CD4-positive, alpha-beta memory T cell (primary cell): ENCODE measurements at regions of chr21 and their contacts with region 1.

Region 1: GRCh38 chr21:42220138-42220701 is 1.3 kb downstream of the ABCG1 start:
- DNase-seq: peak; percentile 89 to 96 (median 92)
- H3K4me3 ChIP-seq: peak overlapping the region; percentile 80 to 91
- H3K4me3 Mint-ChIP-seq: peak overlapping the region; percentile 86 to 100 (median 96)
- H3K27ac ChIP-seq: peak overlapping the region; percentile 84
- H3K27ac Mint-ChIP-seq: peak overlapping the region; percentile 87 to 100 (median 96)
- H3K4me1 ChIP-seq: peaks cover 27% of the 10 kb centered on the region
- H3K4me1 Mint-ChIP-seq: peaks cover 20 to 44% (median 28%) of the 10 kb centered on the region in 4 donors
- H3K27me3 ChIP-seq: no peaks in the 10 kb centered on the region
- H3K27me3 Mint-ChIP-seq: no peaks in the 10 kb centered on the region

Region 2: DNA sequence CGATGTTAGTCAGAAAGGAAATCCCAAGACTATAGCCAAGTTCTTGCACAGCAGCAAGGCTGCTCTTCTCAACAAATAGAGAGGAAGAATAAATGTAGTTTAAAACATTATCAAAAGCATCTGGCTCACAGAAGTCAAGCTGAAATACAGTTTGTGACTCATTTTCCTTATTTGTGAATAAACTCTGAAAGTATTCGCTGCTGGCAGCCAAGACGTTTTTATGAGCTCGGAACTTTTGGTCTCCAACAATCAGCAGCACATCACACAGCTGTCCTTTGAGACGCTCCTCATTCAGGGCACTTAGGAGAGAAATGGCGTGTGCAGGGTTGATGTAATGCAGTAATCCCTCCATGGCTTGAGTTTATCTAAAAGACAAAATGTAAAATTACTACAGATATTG is 226.5 kb before region 1 on chr21:
- CTCF ChIA-PET with region 1: no interaction called
- POLR2A ChIA-PET with region 1: no interaction called
- intact Hi-C with region 1: no loop called
- DNase-seq: no peak
- H3K4me3 ChIP-seq: no peak overlapping the region
- H3K4me3 Mint-ChIP-seq: no peak overlapping the region
- H3K27ac ChIP-seq: no peak overlapping the region
- H3K27ac Mint-ChIP-seq: no peak overlapping the region
- H3K4me1 ChIP-seq: no peaks in the 10 kb centered on the region
- H3K4me1 Mint-ChIP-seq: peaks cover 0 to 8% (median 0%) of the 10 kb centered on the region in 4 donors
- H3K27me3 ChIP-seq: no peaks in the 10 kb centered on the region
- H3K27me3 Mint-ChIP-seq: no peaks in the 10 kb centered on the region

Region 3: DNA sequence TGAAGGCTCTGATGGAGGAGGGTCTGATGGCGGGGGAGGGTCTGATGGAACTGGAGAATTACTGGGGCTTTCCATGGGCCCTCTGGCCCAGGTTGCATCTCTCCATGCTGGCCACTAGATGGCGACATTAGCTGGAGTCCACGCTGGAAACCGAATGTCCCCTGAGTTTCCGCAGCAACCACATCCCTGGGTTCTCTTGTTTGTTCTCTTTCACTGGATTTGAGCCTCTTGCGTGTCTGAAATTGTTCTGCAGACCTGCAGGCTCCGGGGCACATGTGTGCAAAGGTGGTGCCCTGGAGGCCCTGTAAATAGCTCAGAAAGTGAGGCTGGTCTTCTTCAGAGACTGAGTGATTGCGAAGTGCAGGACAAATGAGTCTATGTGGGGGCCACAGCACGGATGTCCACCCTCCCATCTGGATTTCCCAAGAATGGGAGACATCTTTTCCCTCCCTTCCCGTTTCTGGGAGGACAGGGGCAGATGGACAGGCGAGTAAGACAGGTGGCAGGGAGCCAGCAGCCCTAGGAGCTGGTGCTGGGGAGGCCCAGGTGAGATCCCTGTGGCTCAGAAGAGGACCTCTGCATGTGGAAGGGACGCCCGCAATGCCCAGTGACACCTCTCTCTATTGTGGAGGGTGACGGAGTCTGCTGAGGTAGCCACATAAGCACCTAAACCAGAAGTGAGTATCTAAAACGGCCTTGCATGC is 74.5 kb before region 1 on chr21:
- CTCF ChIA-PET with region 1: interaction called, 10 read pairs
- POLR2A ChIA-PET with region 1: no interaction called
- intact Hi-C with region 1: no loop called
- DNase-seq: peak; percentile 67 to 72 (median 70)
- H3K4me3 ChIP-seq: no peak overlapping the region
- H3K4me3 Mint-ChIP-seq: peak overlapping the region in 1 of 8 donors; percentile 13
- H3K27ac ChIP-seq: no peak overlapping the region
- H3K27ac Mint-ChIP-seq: peak overlapping the region; percentile 28 to 89 (median 51)
- H3K4me1 ChIP-seq: peaks cover 4% of the 10 kb centered on the region
- H3K4me1 Mint-ChIP-seq: peaks cover 4 to 7% (median 5%) of the 10 kb centered on the region in 4 donors
- H3K27me3 ChIP-seq: no peaks in the 10 kb centered on the region
- H3K27me3 Mint-ChIP-seq: peaks cover 5 to 7% of the 10 kb centered on the region in 2 donors

Region 4: DNA sequence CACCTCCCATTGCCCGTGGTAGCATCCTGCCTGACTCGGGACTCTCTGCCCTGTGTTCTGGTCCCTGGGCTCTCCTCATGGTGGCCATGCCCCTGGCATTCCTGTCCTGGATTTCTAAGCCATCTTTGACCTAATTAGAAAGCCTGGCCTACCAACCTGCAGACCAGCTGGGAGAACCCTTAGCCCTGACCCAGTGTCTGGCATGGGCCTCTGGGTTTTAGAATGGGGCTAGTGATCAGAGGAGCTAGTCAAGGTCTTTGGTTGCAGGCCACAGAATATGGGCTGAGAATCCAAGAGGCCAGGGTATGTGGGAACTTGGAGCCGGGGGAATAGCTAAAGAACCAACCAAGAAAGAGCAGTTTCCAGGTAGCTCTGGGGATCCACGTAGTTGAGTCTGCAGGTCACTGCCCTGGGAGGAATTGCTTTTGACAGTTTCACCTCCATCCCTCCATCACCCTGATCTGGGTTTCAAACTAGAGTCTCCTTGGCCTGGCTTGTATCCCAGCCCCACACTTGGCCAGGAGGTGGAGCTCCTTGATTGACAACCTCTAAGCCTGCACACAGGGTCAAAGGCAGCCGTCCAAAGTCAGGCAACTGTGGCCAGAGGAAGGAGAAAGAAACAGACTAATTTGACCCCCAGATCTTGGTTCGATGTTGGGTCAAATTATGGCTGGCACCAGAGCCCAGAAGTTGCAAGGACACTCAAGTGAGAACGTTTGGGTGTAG is 56.0 kb before region 1 on chr21:
- CTCF ChIA-PET with region 1: interaction called, 11 read pairs
- POLR2A ChIA-PET with region 1: no interaction called
- intact Hi-C with region 1: no loop called
- DNase-seq: peak; percentile 42 to 58 (median 51)
- H3K4me3 ChIP-seq: no peak overlapping the region
- H3K4me3 Mint-ChIP-seq: peak overlapping the region in 1 of 8 donors; percentile 21
- H3K27ac ChIP-seq: no peak overlapping the region
- H3K27ac Mint-ChIP-seq: peak overlapping the region in 3 of 7 donors; percentile 42 to 64 (median 59)
- H3K4me1 ChIP-seq: peaks cover 10% of the 10 kb centered on the region
- H3K4me1 Mint-ChIP-seq: peaks cover 8 to 40% (median 20%) of the 10 kb centered on the region in 4 donors
- H3K27me3 ChIP-seq: no peaks in the 10 kb centered on the region
- H3K27me3 Mint-ChIP-seq: no peaks in the 10 kb centered on the region

Region 5: DNA sequence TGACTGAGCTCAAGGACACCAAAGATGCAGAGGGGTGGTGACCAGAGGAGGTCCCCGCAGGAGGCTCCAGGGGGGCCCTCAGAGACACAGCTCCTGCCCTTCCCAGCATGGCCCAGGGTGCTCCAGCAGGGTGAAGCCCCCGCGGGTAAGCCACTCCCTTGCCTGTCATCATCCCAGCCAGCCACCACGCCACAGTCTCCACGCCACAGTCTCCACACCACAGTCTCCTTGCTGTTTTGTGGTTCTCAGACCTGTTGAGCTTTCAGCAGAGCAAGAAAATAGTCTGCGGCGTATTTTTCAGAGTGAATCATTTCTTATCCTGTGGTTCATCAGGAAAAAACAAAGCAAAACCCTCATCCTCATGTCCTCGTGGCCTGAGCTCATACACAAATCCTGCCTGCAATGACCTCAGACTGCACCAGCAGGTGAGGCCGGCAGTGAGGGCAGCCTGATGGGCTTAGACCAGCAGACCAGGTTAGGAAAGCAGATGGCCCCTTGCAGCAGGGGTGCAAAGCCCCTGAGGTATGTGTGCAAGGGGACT is 27.0 kb before region 1 on chr21:
- CTCF ChIA-PET with region 1: interaction called, 3 read pairs
- POLR2A ChIA-PET with region 1: interaction called, 35 read pairs
- intact Hi-C with region 1: loop called (anchors 1 kb)
- DNase-seq: peak; percentile 45 to 85 (median 49)
- H3K4me3 ChIP-seq: no peak overlapping the region
- H3K4me3 Mint-ChIP-seq: peak overlapping the region in 7 of 8 donors; percentile 22 to 79 (median 65)
- H3K27ac ChIP-seq: no peak overlapping the region
- H3K27ac Mint-ChIP-seq: peak overlapping the region; percentile 65 to 93 (median 84)
- H3K4me1 ChIP-seq: peaks cover 56% of the 10 kb centered on the region
- H3K4me1 Mint-ChIP-seq: peaks cover 38 to 70% (median 54%) of the 10 kb centered on the region in 4 donors
- H3K27me3 ChIP-seq: no peaks in the 10 kb centered on the region
- H3K27me3 Mint-ChIP-seq: no peaks in the 10 kb centered on the region

Region 6: GRCh38 chr21:42199488-42200458 is 20.4 kb before region 1 on chr21:
- CTCF ChIA-PET with region 1: interaction called, 3 read pairs
- POLR2A ChIA-PET with region 1: interaction called, 15 read pairs
- intact Hi-C with region 1: no loop called
- DNase-seq: peak; percentile 39 to 61 (median 43)
- H3K4me3 ChIP-seq: no peak overlapping the region
- H3K4me3 Mint-ChIP-seq: peak overlapping the region in 7 of 8 donors; percentile 59 to 81 (median 74)
- H3K27ac ChIP-seq: peak overlapping the region; percentile 1
- H3K27ac Mint-ChIP-seq: peak overlapping the region; percentile 80 to 89 (median 85)
- H3K4me1 ChIP-seq: peaks cover 36% of the 10 kb centered on the region
- H3K4me1 Mint-ChIP-seq: peaks cover 24 to 60% (median 42%) of the 10 kb centered on the region in 4 donors
- H3K27me3 ChIP-seq: no peaks in the 10 kb centered on the region
- H3K27me3 Mint-ChIP-seq: no peaks in the 10 kb centered on the region

Region 7: GRCh38 chr21:42233067-42233961 is 13.1 kb after region 1 on chr21:
- CTCF ChIA-PET with region 1: interaction called, 24 read pairs
- POLR2A ChIA-PET with region 1: interaction called, 80 read pairs
- intact Hi-C with region 1: loop called (anchors 1 kb)
- DNase-seq: peak; percentile 82 to 98 (median 86)
- H3K4me3 ChIP-seq: no peak overlapping the region
- H3K4me3 Mint-ChIP-seq: peak overlapping the region; percentile 66 to 85 (median 78)
- H3K27ac ChIP-seq: peak overlapping the region; percentile 96
- H3K27ac Mint-ChIP-seq: peak overlapping the region; percentile 93 to 99 (median 97)
- H3K4me1 ChIP-seq: peaks cover 96% of the 10 kb centered on the region
- H3K4me1 Mint-ChIP-seq: peaks cover 61 to 99% (median 89%) of the 10 kb centered on the region in 4 donors
- H3K27me3 ChIP-seq: no peaks in the 10 kb centered on the region
- H3K27me3 Mint-ChIP-seq: no peaks in the 10 kb centered on the region

Region 8: GRCh38 chr21:42238185-42238934 is 18.1 kb after region 1 on chr21:
- CTCF ChIA-PET with region 1: interaction called, 24 read pairs
- POLR2A ChIA-PET with region 1: interaction called, 80 read pairs
- intact Hi-C with region 1: loop called (anchors 1 kb)
- DNase-seq: peak; percentile 77 to 89 (median 83)
- H3K4me3 ChIP-seq: peak overlapping the region in 1 of 2 donors; percentile 44
- H3K4me3 Mint-ChIP-seq: peak overlapping the region; percentile 49 to 88 (median 75)
- H3K27ac ChIP-seq: peak overlapping the region; percentile 96
- H3K27ac Mint-ChIP-seq: peak overlapping the region; percentile 88 to 99 (median 96)
- H3K4me1 ChIP-seq: peaks cover 66% of the 10 kb centered on the region
- H3K4me1 Mint-ChIP-seq: peaks cover 50 to 86% (median 59%) of the 10 kb centered on the region in 4 donors
- H3K27me3 ChIP-seq: no peaks in the 10 kb centered on the region
- H3K27me3 Mint-ChIP-seq: no peaks in the 10 kb centered on the region